ENCODE measurements at regions of chr7 and their contacts with region 1.

Region 1: GRCh38 chr7:36291387-36292316 is 98.0 kb upstream of the ANLN start:
- DNase-seq: peak; percentile 41 to 88 (median 78)
- ATAC-seq: peak; percentile 54
- H3K4me3 ChIP-seq: peak overlapping the region; percentile 18 to 27
- H3K4me3 Mint-ChIP-seq: peak overlapping the region; percentile 54
- H3K27ac ChIP-seq: no peak overlapping the region
- H3K27ac Mint-ChIP-seq: no peak overlapping the region
- H3K4me1 ChIP-seq: peaks cover 25% of the 10 kb centered on the region
- H3K4me1 Mint-ChIP-seq: peaks cover 34% of the 10 kb centered on the region
- H3K27me3 ChIP-seq: no peaks in the 10 kb centered on the region
- H3K27me3 Mint-ChIP-seq: no peaks in the 10 kb centered on the region
- CTCF ChIP-seq: peak; percentile 93

Region 2: DNA sequence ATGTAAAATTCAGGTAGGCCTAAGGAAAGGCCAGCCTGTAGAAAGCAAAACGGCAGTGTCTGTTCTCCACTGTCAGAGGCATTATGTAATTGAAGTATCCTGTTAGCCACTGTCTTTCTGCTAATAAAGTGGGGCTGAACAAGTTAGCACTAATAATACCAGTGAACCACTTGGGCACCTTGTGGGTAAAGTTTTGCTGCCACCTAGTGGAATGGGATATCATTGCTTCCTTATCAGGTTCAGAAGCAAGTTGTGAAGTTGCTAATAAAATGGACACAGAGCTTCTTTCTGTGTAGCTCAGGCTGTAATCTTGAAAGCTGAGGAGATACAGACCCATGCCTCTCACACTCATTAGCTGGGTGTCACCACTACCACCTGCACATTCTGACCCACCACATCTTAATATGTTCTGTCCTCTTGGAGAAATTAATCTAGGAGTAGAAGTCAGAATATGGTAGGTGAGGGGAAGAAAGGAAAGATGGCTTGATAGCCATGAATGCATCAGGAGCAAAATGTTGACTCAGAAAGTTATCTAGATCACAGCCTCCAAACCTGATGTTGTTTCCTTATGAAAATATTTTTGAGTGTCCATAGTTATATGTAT is 315.7 kb before region 1 on chr7:
- CTCF ChIA-PET with region 1: interaction called, 24 read pairs
- POLR2A ChIA-PET with region 1: no interaction called
- intact Hi-C with region 1: no loop called
- DNase-seq: peak in 6 of 9 experiments; percentile 27 to 81 (median 46)
- ATAC-seq: peak; percentile 76
- H3K4me3 ChIP-seq: no peak overlapping the region
- H3K4me3 Mint-ChIP-seq: no peak overlapping the region
- H3K27ac ChIP-seq: no peak overlapping the region
- H3K27ac Mint-ChIP-seq: no peak overlapping the region
- H3K4me1 ChIP-seq: no peaks in the 10 kb centered on the region
- H3K4me1 Mint-ChIP-seq: peaks cover 4% of the 10 kb centered on the region
- H3K27me3 ChIP-seq: peaks cover 3 to 7% of the 10 kb centered on the region in 2 experiments
- H3K27me3 Mint-ChIP-seq: peaks cover 15% of the 10 kb centered on the region
- CTCF ChIP-seq: peak; percentile 80

Region 3: DNA sequence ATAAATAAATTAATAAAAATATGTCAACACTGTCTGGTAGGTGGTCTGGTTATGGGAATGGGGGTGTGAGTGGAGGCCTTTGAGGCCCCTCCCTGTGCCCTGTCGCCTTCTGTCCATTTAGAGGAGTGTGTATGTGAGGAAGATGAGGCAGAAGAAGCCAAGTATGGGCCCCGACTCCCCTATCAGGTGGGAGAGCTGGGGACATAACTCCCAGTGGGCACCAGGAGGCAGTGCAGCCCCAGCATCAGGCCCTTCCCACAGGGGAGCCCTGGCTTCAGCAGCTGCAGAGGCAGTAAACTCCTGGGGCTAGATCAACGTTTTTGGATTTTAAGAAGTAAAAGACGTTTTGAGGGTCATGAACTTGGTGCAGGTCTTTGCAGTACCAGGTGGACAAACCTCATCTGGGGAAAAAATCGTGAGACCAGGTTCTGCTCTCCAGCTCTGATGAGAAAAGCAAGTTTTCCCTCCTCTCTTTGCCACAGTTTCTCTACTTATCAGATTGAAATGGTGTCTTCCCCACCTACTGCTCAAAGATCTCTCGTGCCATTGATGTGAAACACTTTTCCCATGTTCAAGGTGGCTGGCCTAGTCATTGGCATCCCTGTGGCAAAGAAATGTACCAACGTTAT is 306.4 kb before region 1 on chr7:
- CTCF ChIA-PET with region 1: interaction called, 206 read pairs
- POLR2A ChIA-PET with region 1: interaction called, 9 read pairs
- intact Hi-C with region 1: loop called in 1 of 2 experiments (anchors 1 kb)
- DNase-seq: peak; percentile 63 to 86 (median 78)
- ATAC-seq: peak; percentile 100
- H3K4me3 ChIP-seq: no peak overlapping the region
- H3K4me3 Mint-ChIP-seq: no peak overlapping the region
- H3K27ac ChIP-seq: no peak overlapping the region
- H3K27ac Mint-ChIP-seq: no peak overlapping the region
- H3K4me1 ChIP-seq: no peaks in the 10 kb centered on the region
- H3K4me1 Mint-ChIP-seq: no peaks in the 10 kb centered on the region
- H3K27me3 ChIP-seq: no peaks in the 10 kb centered on the region
- H3K27me3 Mint-ChIP-seq: no peaks in the 10 kb centered on the region
- CTCF ChIP-seq: peak; percentile 82

Region 4: GRCh38 chr7:36152756-36153570 is 138.7 kb before region 1 on chr7 and contains the start of gene EEPD1:
- CTCF ChIA-PET with region 1: interaction called, 4 read pairs
- POLR2A ChIA-PET with region 1: no interaction called
- intact Hi-C with region 1: loop called (anchors 1 to 5 kb)
- DNase-seq: peak; percentile 98 to 100 (median 100)
- ATAC-seq: peak; percentile 94
- H3K4me3 ChIP-seq: peak within 1 kb of the TSS; percentile 60 to 73
- H3K4me3 Mint-ChIP-seq: peak within 1 kb of the TSS; percentile 87
- H3K27ac ChIP-seq: peak within 1 kb of the TSS; percentile 35 to 54
- H3K27ac Mint-ChIP-seq: peak within 1 kb of the TSS; percentile 25
- H3K4me1 ChIP-seq: peaks cover 12% of the 10 kb centered on the region
- H3K4me1 Mint-ChIP-seq: peaks cover 24% of the 10 kb centered on the region
- H3K27me3 ChIP-seq: no peaks in the 10 kb centered on the region
- H3K27me3 Mint-ChIP-seq: no peaks in the 10 kb centered on the region
- CTCF ChIP-seq: no peak
- total RNA-seq, gene EEPD1: 0.98 to 1.1 TPM

Region 5: DNA sequence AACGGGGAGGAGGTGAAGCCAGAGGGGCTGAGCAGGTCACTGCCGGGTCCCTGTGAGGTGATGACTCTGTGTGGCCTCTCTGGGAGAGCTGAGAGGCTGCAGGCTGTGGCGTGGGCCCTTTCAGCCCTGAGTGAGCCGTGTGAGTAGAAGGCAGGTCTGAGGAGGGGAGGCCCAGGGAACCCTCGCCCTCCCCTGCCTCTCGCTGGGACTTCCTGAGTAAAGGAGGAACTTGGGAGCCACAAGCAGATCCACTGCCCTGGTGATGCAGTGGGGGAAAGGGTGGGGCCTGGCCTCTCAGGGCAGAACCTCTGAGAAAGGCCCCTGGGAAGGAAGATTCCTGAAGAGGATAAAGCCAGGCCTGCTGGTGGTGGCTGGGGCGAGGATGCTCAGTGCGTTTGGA is 115.8 kb before region 1 on chr7:
- CTCF ChIA-PET with region 1: no interaction called
- POLR2A ChIA-PET with region 1: no interaction called
- intact Hi-C with region 1: no loop called
- DNase-seq: peak in 1 of 9 experiments; percentile 23
- ATAC-seq: no peak
- H3K4me3 ChIP-seq: no peak overlapping the region
- H3K4me3 Mint-ChIP-seq: no peak overlapping the region
- H3K27ac ChIP-seq: no peak overlapping the region
- H3K27ac Mint-ChIP-seq: no peak overlapping the region
- H3K4me1 ChIP-seq: no peaks in the 10 kb centered on the region
- H3K4me1 Mint-ChIP-seq: peaks cover 1% of the 10 kb centered on the region
- H3K27me3 ChIP-seq: no peaks in the 10 kb centered on the region
- H3K27me3 Mint-ChIP-seq: no peaks in the 10 kb centered on the region
- CTCF ChIP-seq: no peak

Region 6: GRCh38 chr7:36280840-36281812 is 10.5 kb before region 1 on chr7:
- CTCF ChIA-PET with region 1: interaction called, 17 read pairs
- POLR2A ChIA-PET with region 1: no interaction called
- intact Hi-C with region 1: no loop called
- DNase-seq: peak in 2 of 9 experiments; percentile 24 to 33
- ATAC-seq: no peak
- H3K4me3 ChIP-seq: no peak overlapping the region
- H3K4me3 Mint-ChIP-seq: no peak overlapping the region
- H3K27ac ChIP-seq: no peak overlapping the region
- H3K27ac Mint-ChIP-seq: no peak overlapping the region
- H3K4me1 ChIP-seq: peaks cover 34% of the 10 kb centered on the region
- H3K4me1 Mint-ChIP-seq: peaks cover 31% of the 10 kb centered on the region
- H3K27me3 ChIP-seq: no peaks in the 10 kb centered on the region
- H3K27me3 Mint-ChIP-seq: no peaks in the 10 kb centered on the region
- CTCF ChIP-seq: no peak

Region 7: GRCh38 chr7:36303202-36304098 is 11.8 kb after region 1 on chr7:
- CTCF ChIA-PET with region 1: interaction called, 18 read pairs
- POLR2A ChIA-PET with region 1: no interaction called
- intact Hi-C with region 1: no loop called
- DNase-seq: no peak
- ATAC-seq: no peak
- H3K4me3 ChIP-seq: no peak overlapping the region
- H3K4me3 Mint-ChIP-seq: no peak overlapping the region
- H3K27ac ChIP-seq: no peak overlapping the region
- H3K27ac Mint-ChIP-seq: no peak overlapping the region
- H3K4me1 ChIP-seq: no peaks in the 10 kb centered on the region
- H3K4me1 Mint-ChIP-seq: no peaks in the 10 kb centered on the region
- H3K27me3 ChIP-seq: no peaks in the 10 kb centered on the region
- H3K27me3 Mint-ChIP-seq: no peaks in the 10 kb centered on the region
- CTCF ChIP-seq: no peak

Region 8: GRCh38 chr7:36315309-36316133 is 23.9 kb after region 1 on chr7:
- CTCF ChIA-PET with region 1: interaction called, 41 read pairs
- POLR2A ChIA-PET with region 1: no interaction called
- intact Hi-C with region 1: no loop called
- DNase-seq: peak in 1 of 9 experiments; percentile 11
- ATAC-seq: no peak
- H3K4me3 ChIP-seq: no peak overlapping the region
- H3K4me3 Mint-ChIP-seq: no peak overlapping the region
- H3K27ac ChIP-seq: no peak overlapping the region
- H3K27ac Mint-ChIP-seq: no peak overlapping the region
- H3K4me1 ChIP-seq: no peaks in the 10 kb centered on the region
- H3K4me1 Mint-ChIP-seq: peaks cover 2% of the 10 kb centered on the region
- H3K27me3 ChIP-seq: no peaks in the 10 kb centered on the region
- H3K27me3 Mint-ChIP-seq: no peaks in the 10 kb centered on the region
- CTCF ChIP-seq: no peak

Region 9: DNA sequence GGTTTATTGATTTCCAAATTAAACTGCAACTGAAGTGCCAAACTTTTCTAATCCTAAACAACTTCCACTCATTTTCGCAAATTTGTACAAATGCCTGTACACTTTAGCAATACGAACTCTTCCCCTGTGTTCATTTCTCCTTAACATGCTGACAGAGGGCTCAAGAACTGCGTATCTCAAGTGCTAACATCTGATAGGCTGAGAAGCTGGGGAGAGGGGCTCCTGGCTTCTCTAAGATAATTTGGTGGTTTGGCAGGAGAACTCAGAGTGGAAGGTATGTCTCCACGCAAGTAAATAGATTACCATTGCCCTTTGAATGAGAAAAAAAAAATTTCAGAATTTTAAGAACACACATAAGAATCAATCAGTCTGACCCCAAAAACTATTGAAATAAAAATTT is 44.7 kb after region 1 on chr7:
- CTCF ChIA-PET with region 1: no interaction called
- POLR2A ChIA-PET with region 1: no interaction called
- intact Hi-C with region 1: no loop called
- DNase-seq: no peak
- ATAC-seq: no peak
- H3K4me3 ChIP-seq: no peak overlapping the region
- H3K4me3 Mint-ChIP-seq: no peak overlapping the region
- H3K27ac ChIP-seq: no peak overlapping the region
- H3K27ac Mint-ChIP-seq: no peak overlapping the region
- H3K4me1 ChIP-seq: no peaks in the 10 kb centered on the region
- H3K4me1 Mint-ChIP-seq: no peaks in the 10 kb centered on the region
- H3K27me3 ChIP-seq: no peaks in the 10 kb centered on the region
- H3K27me3 Mint-ChIP-seq: peaks cover 5% of the 10 kb centered on the region
- CTCF ChIP-seq: no peak